ENCODE measurements at regions of chr7 and their contacts with region 1.

Region 1: DNA sequence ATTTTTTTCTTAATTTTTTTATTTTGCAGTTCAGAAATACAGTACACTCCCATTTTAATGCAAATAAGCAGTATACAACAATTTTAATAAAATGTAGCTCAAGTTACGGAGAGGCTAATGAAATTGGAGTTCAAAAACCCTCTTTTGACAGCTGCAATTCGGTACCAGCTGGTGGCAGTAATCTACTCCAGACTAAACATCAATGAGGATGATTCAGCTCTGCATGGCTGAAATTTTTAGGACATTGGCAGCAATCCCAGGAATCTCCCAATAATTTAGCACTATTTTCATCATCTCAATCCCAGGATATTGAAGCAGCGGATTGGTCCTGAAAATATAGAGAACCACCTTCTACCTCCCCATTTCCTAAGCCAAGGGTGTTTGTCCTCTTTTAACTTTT is 278.8 kb downstream of the CACNA2D1 start:
- DNase-seq: peak; percentile 8 to 35
- ATAC-seq: peak in 1 of 2 donors; percentile 63
- H3K4me3 ChIP-seq: no peak overlapping the region
- H3K27ac ChIP-seq: peak overlapping the region in 2 of 4 donors; percentile 35 to 51
- H3K4me1 ChIP-seq: peaks cover 19 to 32% of the 10 kb centered on the region in 2 donors
- H3K27me3 ChIP-seq: no peaks in the 10 kb centered on the region
- CTCF ChIP-seq: peak in 2 of 5 experiments; percentile 20 to 42
- POLR2A ChIP-seq: no peak

Region 2: GRCh38 chr7:82183634-82184033 is 18.8 kb after region 1 on chr7:
- in situ Hi-C with region 1: no loop called
- intact Hi-C with region 1: no loop called
- DNase-seq: no peak
- ATAC-seq: peak in 1 of 2 donors; percentile 60
- H3K4me3 ChIP-seq: no peak overlapping the region
- H3K27ac ChIP-seq: no peak overlapping the region
- H3K4me1 ChIP-seq: peaks cover 0 to 3% of the 10 kb centered on the region in 2 donors
- H3K27me3 ChIP-seq: no peaks in the 10 kb centered on the region
- CTCF ChIP-seq: no peak
- POLR2A ChIP-seq: no peak

Region 3: DNA sequence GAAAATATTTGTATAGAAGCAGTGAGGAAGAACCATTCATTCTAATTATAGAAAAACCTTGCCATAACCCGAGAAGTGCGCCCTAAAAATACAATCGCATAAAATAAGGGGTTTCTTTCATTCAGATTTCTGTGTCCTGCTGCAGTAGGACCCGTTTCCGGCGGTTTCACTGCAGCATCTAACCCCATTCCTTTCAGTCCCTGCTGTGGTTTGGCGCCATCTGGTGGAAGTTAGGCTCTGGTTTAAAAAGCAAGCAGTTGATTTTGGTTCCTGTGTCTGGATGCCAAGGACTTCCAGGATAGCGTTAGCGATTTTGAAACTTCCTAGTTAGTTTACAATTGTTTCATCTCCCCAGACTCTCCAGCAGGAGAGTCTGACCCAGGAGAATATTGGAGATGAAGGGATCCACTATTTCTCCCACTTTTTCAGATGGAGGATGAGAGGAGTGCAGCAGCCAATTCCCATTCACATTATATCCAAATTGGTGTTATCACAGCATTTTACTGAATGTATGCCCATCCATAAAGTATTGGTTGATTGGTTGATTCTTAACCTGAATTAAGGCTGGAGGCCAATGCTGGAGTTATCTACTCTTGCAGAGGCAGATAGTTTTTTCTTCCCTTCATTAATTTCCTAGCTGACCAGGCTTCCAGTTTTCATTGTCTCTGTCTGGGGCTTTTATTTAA is 407.5 kb after region 1 on chr7:
- in situ Hi-C with region 1: no loop called
- intact Hi-C with region 1: loop called (anchors 5 kb)
- DNase-seq: peak; percentile 61 to 74
- ATAC-seq: peak; percentile 88 to 93
- H3K4me3 ChIP-seq: peak overlapping the region in 2 of 4 donors; percentile 19 to 24
- H3K27ac ChIP-seq: no peak overlapping the region
- H3K4me1 ChIP-seq: peaks cover 0 to 11% of the 10 kb centered on the region in 2 donors
- H3K27me3 ChIP-seq: no peaks in the 10 kb centered on the region
- CTCF ChIP-seq: peak; percentile 83 to 94 (median 87)
- POLR2A ChIP-seq: no peak